Heart right ventricle (tissue), 16 donors: ENCODE measurements at regions of chr6 and their contacts with region 1.

Region 1: GRCh38 chr6:89371849-89372505 is 19.5 kb upstream of the UBE2J1 start:
- DNase-seq: peak; percentile 73 to 76
- ATAC-seq: peak; percentile 82 to 93 (median 88)
- H3K4me3 ChIP-seq: no peak overlapping the region
- H3K27ac ChIP-seq: peak overlapping the region in 6 of 10 donors; percentile 2 to 48 (median 24)
- H3K4me1 ChIP-seq: peaks cover 0 to 37% (median 30%) of the 10 kb centered on the region in 9 donors
- H3K27me3 ChIP-seq: no peaks in the 10 kb centered on the region
- CTCF ChIP-seq: peak; percentile 82 to 99 (median 96)

Region 2: GRCh38 chr6:89117211-89118108 is 254.5 kb before region 1 on chr6 and contains the start of gene SRSF12:
- intact Hi-C with region 1: loop called in 2 of 10 experiments (anchors 10 kb)
- DNase-seq: peak; percentile 13 to 36
- ATAC-seq: peak; percentile 80 to 90 (median 86)
- H3K4me3 ChIP-seq: peak within 1 kb of the TSS; percentile 53 to 96 (median 73)
- H3K27ac ChIP-seq: peak within 1 kb of the TSS in 3 of 10 donors; percentile 1 to 70 (median 46)
- H3K4me1 ChIP-seq: peaks cover 0 to 14% (median 7%) of the 10 kb centered on the region in 9 donors
- H3K27me3 ChIP-seq: no peaks in the 10 kb centered on the region
- CTCF ChIP-seq: peak in 1 of 9 donors; percentile 21
- total RNA-seq, gene SRSF12: 0.06 to 0.47 (median 0.17) TPM in 8 of 10 donors, not detected in the others

Region 3: GRCh38 chr6:89122625-89123024 is 249.4 kb before region 1 on chr6:
- intact Hi-C with region 1: loop called in 2 of 10 experiments (anchors 10 kb)
- DNase-seq: no peak
- ATAC-seq: peak in 5 of 8 donors; percentile 55 to 72 (median 71)
- H3K4me3 ChIP-seq: no peak overlapping the region
- H3K27ac ChIP-seq: no peak overlapping the region
- H3K4me1 ChIP-seq: peaks cover 0 to 4% (median 0%) of the 10 kb centered on the region in 9 donors
- H3K27me3 ChIP-seq: no peaks in the 10 kb centered on the region
- CTCF ChIP-seq: peak; percentile 21 to 72 (median 55)

Region 4: DNA sequence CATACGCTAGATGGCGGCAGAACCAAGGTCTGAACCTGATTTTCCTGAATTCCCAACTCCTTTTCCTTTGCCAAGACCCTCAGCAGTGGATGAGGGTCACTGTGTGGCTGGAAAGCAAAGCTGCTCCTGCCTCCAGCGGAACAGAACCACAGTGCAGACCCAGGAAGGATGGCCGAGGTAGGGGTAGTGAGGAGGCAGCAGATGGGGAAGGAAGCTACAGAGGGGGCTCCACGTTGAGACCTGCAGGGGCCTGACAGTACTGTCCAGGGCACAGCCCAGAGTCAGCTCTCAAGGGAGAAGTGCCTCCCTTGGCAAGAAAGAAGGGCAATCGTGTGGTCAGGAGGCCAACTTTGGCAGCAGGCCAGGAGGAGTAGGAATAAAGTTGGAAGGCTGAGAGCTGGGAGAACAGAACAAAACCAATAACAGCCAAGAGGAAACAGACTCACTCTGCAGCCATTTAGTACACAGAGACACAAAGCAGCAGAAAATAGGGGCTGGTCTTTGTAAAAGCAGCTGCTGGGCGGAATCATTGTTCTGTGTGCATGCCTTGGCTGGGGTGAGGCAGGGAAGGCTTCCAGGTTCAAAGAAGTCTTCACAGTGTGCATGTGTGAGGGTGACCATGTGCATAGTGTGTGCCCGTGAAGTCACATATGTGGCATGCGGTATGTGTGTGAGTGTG is 60.0 kb before region 1 on chr6:
- intact Hi-C with region 1: loop called in 7 of 10 experiments (anchors 1 to 5 kb)
- DNase-seq: peak; percentile 55 to 67
- ATAC-seq: peak; percentile 53 to 86 (median 80)
- H3K4me3 ChIP-seq: peak overlapping the region in 5 of 10 donors; percentile 23 to 36 (median 28)
- H3K27ac ChIP-seq: peak overlapping the region; percentile 49 to 85 (median 68)
- H3K4me1 ChIP-seq: peaks cover 15 to 40% (median 28%) of the 10 kb centered on the region in 9 donors
- H3K27me3 ChIP-seq: no peaks in the 10 kb centered on the region
- CTCF ChIP-seq: peak in 8 of 9 donors; percentile 50 to 78 (median 64)

Region 5: DNA sequence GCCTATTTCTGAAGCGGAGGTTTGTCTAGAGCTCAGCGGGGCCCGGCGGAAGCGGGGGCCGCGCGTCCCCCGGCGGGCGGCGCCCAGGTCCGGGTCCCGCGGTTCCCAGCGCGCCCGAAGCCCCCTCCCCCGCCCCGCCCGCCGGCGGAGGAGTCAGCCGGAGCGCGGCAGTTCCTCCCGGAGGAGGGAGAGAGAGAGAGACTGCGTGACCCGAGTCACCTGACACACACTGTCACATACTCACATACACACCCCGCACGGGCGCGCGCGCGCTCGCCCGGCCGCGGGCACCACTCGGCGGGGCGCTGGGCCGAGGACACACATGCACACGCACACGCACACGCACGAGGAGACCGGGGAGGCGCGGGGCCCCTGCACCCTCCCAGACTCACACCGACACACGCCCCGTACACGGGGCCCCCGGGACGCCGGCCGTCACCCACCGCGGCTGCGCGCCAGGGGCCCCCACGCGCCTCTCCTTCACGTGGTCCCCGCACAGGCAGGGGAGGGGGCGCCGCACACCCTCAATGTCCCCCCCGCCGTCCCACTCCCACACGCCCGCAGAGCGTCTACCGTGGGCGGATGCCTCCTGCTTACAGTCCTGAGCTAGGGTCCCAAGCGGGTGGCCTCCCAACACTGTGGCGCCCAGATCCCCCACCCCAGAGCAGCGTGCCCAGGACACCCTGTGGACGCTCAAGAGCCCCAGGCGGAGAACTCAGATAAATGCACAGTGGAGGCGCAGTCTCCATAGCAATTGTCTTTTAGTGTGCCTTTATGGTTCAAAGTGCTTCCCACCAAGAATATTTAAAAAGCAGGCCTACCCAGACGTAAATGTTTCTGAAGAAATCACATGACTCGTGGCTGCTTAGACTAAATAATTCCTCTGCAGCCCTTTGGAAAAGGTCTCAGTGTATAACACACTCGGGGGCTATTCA is 40.4 kb after region 1 on chr6 and contains the start of gene RRAGD:
- intact Hi-C with region 1: loop called in 7 of 10 experiments (anchors 5 kb)
- DNase-seq: peak; percentile 64 to 68
- ATAC-seq: peak; percentile 70 to 92 (median 88)
- H3K4me3 ChIP-seq: peak within 1 kb of the TSS; percentile 68 to 95 (median 82)
- H3K27ac ChIP-seq: peak within 1 kb of the TSS; percentile 79 to 95 (median 90)
- H3K4me1 ChIP-seq: peaks cover 4 to 44% (median 16%) of the 10 kb centered on the region in 9 donors
- H3K27me3 ChIP-seq: peaks cover 0 to 4% (median 0%) of the 10 kb centered on the region in 7 donors
- CTCF ChIP-seq: peak in 1 of 9 donors; percentile 12
- total RNA-seq, gene RRAGD: 93.1 to 130 (median 120) TPM

Region 6: DNA sequence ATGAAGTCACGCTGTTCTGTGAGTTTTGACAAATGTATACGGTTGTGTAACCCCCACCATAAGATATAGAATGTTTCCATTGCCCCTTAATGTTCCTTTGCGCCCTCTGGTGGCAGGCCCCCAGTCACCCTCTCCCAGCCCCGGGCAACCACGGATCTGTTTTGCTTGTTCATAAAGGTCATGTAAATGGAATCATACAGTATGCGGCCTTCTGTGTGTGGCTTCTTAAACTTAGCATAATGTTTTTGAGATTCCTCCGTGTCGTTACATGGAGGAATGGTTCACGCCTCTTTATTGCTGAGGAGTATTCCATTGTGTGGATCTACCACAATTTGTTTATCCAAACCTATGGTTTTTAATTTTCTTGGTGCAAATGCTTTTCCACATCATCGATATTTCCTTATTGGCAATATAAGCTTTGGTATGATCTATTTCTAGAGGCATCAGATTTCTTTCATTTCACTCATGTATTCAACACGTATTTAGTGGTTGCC is 238.2 kb after region 1 on chr6:
- intact Hi-C with region 1: loop called in 3 of 10 experiments (anchors 5 to 10 kb)
- DNase-seq: peak; percentile 67 to 74
- ATAC-seq: peak in 7 of 8 donors; percentile 59 to 84 (median 77)
- H3K4me3 ChIP-seq: no peak overlapping the region
- H3K27ac ChIP-seq: no peak overlapping the region
- H3K4me1 ChIP-seq: no peaks in the 10 kb centered on the region
- H3K27me3 ChIP-seq: no peaks in the 10 kb centered on the region
- CTCF ChIP-seq: peak; percentile 61 to 91 (median 87)

Region 7: GRCh38 chr6:89729818-89730217 is 357.8 kb after region 1 on chr6:
- intact Hi-C with region 1: no loop called
- DNase-seq: no peak
- ATAC-seq: no peak
- H3K4me3 ChIP-seq: no peak overlapping the region
- H3K27ac ChIP-seq: no peak overlapping the region
- H3K4me1 ChIP-seq: no peaks in the 10 kb centered on the region
- H3K27me3 ChIP-seq: no peaks in the 10 kb centered on the region
- CTCF ChIP-seq: no peak